ENCODE measurements at regions of chr1 and their contacts with region 1.

Region 1: GRCh38 chr1:20521960-20522861 is 14.3 kb upstream of the MUL1 start:
- DNase-seq: peak; percentile 60 to 84
- ATAC-seq: peak; percentile 85

Region 2: GRCh38 chr1:20634594-20635084 is 112.4 kb after region 1 on chr1:
- intact Hi-C with region 1: loop called in 1 of 2 experiments (anchors 5 kb)
- DNase-seq: peak; percentile 56 to 60
- ATAC-seq: peak; percentile 61

Region 3: DNA sequence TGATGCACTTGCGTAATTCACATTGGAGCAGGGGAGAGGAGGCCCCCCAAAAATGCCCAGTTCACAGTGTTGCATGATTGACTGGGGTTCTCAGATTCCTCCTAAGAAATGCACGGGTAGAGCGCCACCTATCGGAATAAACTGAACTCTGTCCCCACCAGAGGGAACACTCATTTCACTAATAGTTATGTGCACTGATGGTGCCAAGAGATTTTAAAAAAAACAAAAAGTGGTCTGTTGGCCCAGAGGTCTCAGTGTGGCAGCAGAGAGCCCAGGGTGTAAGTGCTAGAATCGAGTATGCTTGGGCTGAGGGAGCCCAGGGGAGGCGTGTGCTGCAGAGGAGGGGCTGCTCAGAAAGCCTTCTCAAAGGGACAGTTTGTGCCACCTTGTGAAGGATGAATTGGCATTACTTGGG is 118.0 kb after region 1 on chr1:
- intact Hi-C with region 1: loop called (anchors 5 kb)
- DNase-seq: peak in 1 of 2 donors; percentile 55
- ATAC-seq: peak; percentile 79